Breast epithelium (tissue), 4 donors: ENCODE measurements at regions of chr10 and their contacts with region 1.

Region 1: GRCh38 chr10:12644380-12645144 is 295.2 kb downstream of the CAMK1D start:
- DNase-seq: no peak
- H3K4me3 ChIP-seq: no peak overlapping the region
- H3K27ac ChIP-seq: no peak overlapping the region
- H3K4me1 ChIP-seq: no peaks in the 10 kb centered on the region
- H3K27me3 ChIP-seq: no peaks in the 10 kb centered on the region
- CTCF ChIP-seq: no peak
- POLR2A ChIP-seq: no peak

Region 2: GRCh38 chr10:14349081-14349480 is 1704.5 kb after region 1 on chr10:
- intact Hi-C with region 1: loop called (anchors 10 kb)
- DNase-seq: no peak
- H3K4me3 ChIP-seq: no peak overlapping the region
- H3K27ac ChIP-seq: no peak overlapping the region
- H3K4me1 ChIP-seq: no peaks in the 10 kb centered on the region
- H3K27me3 ChIP-seq: no peaks in the 10 kb centered on the region
- CTCF ChIP-seq: no peak
- POLR2A ChIP-seq: no peak